Tibial artery (tissue), 4 donors: ENCODE measurements at regions of chr15 and their contacts with region 1.

Region 1: DNA sequence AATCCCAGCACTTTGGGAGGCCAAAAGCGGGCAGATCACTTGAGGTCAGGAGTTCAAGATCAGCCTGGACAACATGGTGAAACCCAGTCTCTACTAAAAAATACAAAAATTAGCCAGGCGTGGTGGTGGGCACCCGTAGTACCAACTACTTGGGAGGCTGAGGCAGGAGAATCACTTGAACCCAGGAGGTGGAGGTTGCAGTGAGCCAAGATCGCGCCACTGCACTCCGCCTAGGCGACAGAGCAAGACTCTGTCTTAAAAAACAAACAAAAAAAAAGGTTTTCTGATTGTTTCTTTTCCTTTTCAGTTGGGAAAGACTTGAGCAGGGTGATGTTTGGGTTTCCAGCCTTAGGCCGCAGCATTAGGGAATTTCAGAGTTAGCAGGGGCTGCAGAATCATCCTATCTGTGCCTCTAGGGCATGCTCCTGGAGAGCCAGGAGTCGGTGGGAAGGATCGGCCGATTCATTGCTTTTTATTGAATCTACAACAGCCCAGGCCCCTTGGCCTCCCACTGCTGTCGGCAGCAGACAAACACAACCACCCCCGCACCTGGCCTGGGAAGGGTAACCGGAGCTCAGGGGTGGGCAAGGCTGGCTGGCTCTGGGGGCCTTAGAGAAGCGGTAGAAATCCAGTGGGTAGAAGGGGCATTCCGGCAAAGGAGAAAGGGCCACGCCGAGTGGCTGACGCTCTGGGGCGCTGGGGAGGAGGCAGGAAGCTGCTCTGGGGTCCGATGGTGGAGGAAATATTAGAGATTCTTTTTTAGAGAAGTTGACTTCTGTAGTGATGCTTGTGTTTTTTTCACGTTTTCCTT is 6.3 kb downstream of the CHAC1 start:
- DNase-seq: no peak
- H3K4me3 ChIP-seq: no peak overlapping the region
- H3K27ac ChIP-seq: no peak overlapping the region
- H3K4me1 ChIP-seq: peaks cover 0 to 38% (median 24%) of the 10 kb centered on the region in 4 donors
- H3K27me3 ChIP-seq: no peaks in the 10 kb centered on the region
- CTCF ChIP-seq: no peak

Region 2: GRCh38 chr15:40982855-40983254 is 23.3 kb after region 1 on chr15:
- intact Hi-C with region 1: loop called (anchors 1 kb)
- DNase-seq: peak; percentile 45 to 84
- H3K4me3 ChIP-seq: no peak overlapping the region
- H3K27ac ChIP-seq: peak overlapping the region; percentile 7 to 72
- H3K4me1 ChIP-seq: peaks cover 0 to 68% (median 33%) of the 10 kb centered on the region in 4 donors
- H3K27me3 ChIP-seq: no peaks in the 10 kb centered on the region
- CTCF ChIP-seq: no peak

Region 3: GRCh38 chr15:41258706-41259471 is 299.4 kb after region 1 on chr15:
- intact Hi-C with region 1: no loop called
- DNase-seq: no peak
- H3K4me3 ChIP-seq: no peak overlapping the region
- H3K27ac ChIP-seq: no peak overlapping the region
- H3K4me1 ChIP-seq: no peaks in the 10 kb centered on the region
- H3K27me3 ChIP-seq: no peaks in the 10 kb centered on the region
- CTCF ChIP-seq: no peak

Region 4: GRCh38 chr15:41354371-41354770 is 394.8 kb after region 1 on chr15:
- intact Hi-C with region 1: no loop called
- DNase-seq: no peak
- H3K4me3 ChIP-seq: no peak overlapping the region
- H3K27ac ChIP-seq: no peak overlapping the region
- H3K4me1 ChIP-seq: no peaks in the 10 kb centered on the region
- H3K27me3 ChIP-seq: no peaks in the 10 kb centered on the region
- CTCF ChIP-seq: no peak